CD4-positive, alpha-beta T cell (primary cell): ENCODE measurements at regions of chr2 and their contacts with region 1.

Region 1: DNA sequence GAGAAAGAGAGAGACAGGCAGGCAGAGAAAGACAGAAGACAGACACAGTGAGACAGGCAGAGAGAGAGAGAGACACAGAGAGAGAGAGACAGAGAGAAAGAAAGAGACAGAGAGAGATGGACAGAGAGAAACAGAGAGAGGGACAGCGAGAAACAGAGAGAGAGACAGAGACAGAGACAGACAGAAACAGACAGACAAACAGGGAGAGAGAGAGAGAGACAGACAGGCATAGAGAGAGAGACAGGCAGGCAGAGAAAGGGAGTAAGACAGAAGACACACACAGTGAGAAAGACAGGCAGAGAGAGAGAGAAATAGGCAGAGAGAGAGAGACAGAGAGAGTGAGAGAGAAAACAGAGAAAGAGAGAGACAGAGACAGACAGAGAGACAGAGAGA is 105.3 kb upstream of the ANKRD30BL start:
- DNase-seq: peak in 1 of 14 experiments; percentile 5
- ATAC-seq: no peak
- H3K4me3 ChIP-seq: no peak overlapping the region
- H3K4me3 Mint-ChIP-seq: no peak overlapping the region
- H3K27ac ChIP-seq: no peak overlapping the region
- H3K27ac Mint-ChIP-seq: no peak overlapping the region
- H3K4me1 ChIP-seq: peaks cover 14% of the 10 kb centered on the region
- H3K4me1 Mint-ChIP-seq: no peaks in the 10 kb centered on the region
- H3K27me3 ChIP-seq: peaks cover 0 to 19% of the 10 kb centered on the region in 2 experiments
- H3K27me3 Mint-ChIP-seq: peaks cover 7% of the 10 kb centered on the region
- CTCF ChIP-seq: no peak

Region 2: GRCh38 chr2:133844214-133844892 is 1577.3 kb after region 1 on chr2:
- CTCF ChIA-PET with region 1: no interaction called
- POLR2A ChIA-PET with region 1: no interaction called
- intact Hi-C with region 1: loop called (anchors 2 to 5 kb)
- DNase-seq: peak; percentile 26 to 70 (median 34)
- ATAC-seq: peak; percentile 55
- H3K4me3 ChIP-seq: no peak overlapping the region
- H3K4me3 Mint-ChIP-seq: no peak overlapping the region
- H3K27ac ChIP-seq: no peak overlapping the region
- H3K27ac Mint-ChIP-seq: no peak overlapping the region
- H3K4me1 ChIP-seq: peaks cover 3% of the 10 kb centered on the region
- H3K4me1 Mint-ChIP-seq: no peaks in the 10 kb centered on the region
- H3K27me3 ChIP-seq: peaks cover 0 to 7% of the 10 kb centered on the region in 2 experiments
- H3K27me3 Mint-ChIP-seq: peaks cover 29% of the 10 kb centered on the region
- CTCF ChIP-seq: peak; percentile 78